Cardiac septum (tissue), 1 donor: ENCODE measurements at regions of chr6 and their contacts with region 1.

Region 1: GRCh38 chr6:36302227-36302976 is 32.5 kb downstream of the PNPLA1 start:
- DNase-seq: peak; percentile 90

Region 2: GRCh38 chr6:35973670-35974222 is 328.7 kb before region 1 on chr6:
- intact Hi-C with region 1: no loop called
- DNase-seq: no peak

Region 3: DNA sequence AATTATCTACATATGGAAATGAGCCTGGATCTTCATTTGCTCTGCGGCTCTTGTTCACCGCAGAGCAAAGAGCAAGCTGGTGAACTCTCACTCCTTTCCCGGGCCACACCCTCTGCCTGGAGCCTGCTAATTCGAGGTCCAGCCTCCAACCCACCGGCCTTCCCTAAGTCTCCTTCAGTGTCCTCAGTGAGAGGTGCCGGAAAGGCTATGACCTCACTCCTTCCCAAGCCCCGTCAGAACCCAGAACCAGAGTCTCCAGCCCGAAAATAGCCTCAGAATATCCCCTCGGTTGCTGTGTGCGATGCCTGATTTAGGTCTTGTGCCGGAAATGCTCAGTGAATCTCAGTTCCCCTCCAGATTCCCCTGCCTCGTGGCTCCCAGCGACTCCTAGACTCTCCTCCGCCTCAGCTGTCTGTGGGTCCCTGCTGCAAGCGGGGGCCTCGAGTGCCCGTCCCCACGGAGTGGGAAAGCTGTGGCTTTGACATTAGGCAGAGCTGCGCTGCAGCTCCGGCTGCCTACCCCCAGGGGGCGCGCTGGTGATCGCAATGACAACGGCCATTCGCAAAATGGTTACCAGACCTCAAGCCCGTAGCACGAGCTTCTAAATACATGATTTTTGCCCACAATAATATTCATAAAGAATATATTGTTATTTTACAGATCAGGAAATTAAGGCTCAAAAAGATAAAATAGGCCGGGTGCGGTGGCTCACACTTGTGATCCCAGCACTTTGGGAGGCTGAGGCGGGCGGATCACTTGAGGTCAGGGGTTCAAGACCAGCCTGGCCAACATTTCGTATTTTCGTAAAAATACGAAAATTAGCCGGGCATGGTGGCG is 38.4 kb after region 1 on chr6:
- intact Hi-C with region 1: loop called (anchors 5 kb)
- DNase-seq: peak; percentile 91

Region 4: GRCh38 chr6:36392621-36393020 is 90.2 kb after region 1 on chr6:
- intact Hi-C with region 1: no loop called
- DNase-seq: no peak